Activated CD4-positive, alpha-beta memory T cell treated with anti-CD3 and anti-CD28 coated beads for 36 hours (primary cell): ENCODE measurements at regions of chr4 and their contacts with region 1.

Region 1: DNA sequence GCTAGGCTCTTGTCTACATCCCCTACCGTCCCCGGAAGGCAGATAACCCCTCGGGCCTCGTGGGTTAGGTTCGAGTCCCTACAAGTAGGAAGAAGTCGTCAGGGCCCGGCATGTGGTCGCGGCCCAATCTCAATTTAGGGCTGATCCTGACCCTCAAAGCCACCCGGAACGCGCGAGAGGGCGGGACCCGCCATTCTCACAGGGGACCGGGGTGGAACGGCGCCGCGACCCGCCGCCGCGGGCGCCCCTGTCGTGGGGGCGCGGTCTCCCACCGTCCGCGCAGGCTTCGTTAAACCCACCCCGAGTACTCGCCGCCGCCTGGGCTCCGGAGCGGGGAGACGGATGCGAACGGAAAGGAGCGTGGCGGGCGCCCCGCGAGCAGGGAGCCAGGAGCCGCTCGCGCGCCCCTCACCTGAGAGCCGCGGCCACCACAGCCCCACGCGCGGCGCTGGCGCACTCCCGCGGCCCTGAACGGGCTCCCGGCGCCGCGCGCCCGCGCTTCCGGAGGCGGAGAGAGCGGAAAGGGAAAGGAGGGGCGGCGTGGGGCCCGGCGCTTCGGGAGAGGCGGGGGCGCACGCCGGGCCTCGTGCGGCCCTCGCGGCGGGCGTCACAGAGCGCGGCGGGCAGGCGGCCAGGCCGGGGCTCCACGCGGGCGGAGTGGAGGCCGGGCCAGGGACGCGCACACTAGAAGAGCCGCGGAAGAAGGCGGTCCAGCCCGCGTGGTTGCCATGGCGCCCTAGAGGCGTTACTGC is at the start of gene CFAP97:
- DNase-seq: peak; percentile 81
- H3K4me3 Mint-ChIP-seq: peak within 1 kb of the TSS; percentile 94
- H3K27ac Mint-ChIP-seq: peak within 1 kb of the TSS; percentile 97
- H3K4me1 Mint-ChIP-seq: peaks cover 48% of the 10 kb centered on the region
- H3K27me3 Mint-ChIP-seq: no peaks in the 10 kb centered on the region
- total RNA-seq, gene CFAP97: 47.5 to 48.6 TPM

Region 2: DNA sequence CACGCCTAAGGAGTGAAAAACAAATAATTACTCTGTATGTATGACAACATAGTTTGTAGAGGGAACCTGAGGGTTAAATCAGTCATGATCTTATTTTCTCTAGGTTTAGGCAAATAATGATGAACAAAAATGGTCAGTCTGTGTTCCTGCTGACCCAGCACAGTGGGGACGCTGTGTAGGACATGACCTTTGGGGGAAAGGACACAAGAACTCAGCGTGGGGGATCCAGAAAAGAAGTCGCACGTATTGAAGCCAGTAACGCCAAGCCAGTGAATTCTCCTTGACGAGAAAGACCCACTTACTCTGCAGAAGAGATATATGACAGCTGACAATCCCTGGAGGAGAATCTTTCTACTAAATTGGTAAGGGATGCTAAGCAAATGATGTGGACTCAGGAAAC is 148.8 kb before region 1 on chr4:
- CTCF ChIA-PET with region 1: no interaction called
- POLR2A ChIA-PET with region 1: no interaction called
- intact Hi-C with region 1: no loop called
- DNase-seq: no peak
- H3K4me3 Mint-ChIP-seq: no peak overlapping the region
- H3K27ac Mint-ChIP-seq: no peak overlapping the region
- H3K4me1 Mint-ChIP-seq: no peaks in the 10 kb centered on the region
- H3K27me3 Mint-ChIP-seq: peaks cover 24% of the 10 kb centered on the region

Region 3: GRCh38 chr4:185142912-185143595 is 60.6 kb before region 1 on chr4 and contains the start of gene SLC25A4:
- CTCF ChIA-PET with region 1: no interaction called
- POLR2A ChIA-PET with region 1: interaction called, 3 read pairs
- intact Hi-C with region 1: loop called (anchors 1 kb)
- DNase-seq: peak; percentile 90
- H3K4me3 Mint-ChIP-seq: peak within 1 kb of the TSS; percentile 80
- H3K27ac Mint-ChIP-seq: no peak within 1 kb of the TSS
- H3K4me1 Mint-ChIP-seq: peaks cover 13% of the 10 kb centered on the region
- H3K27me3 Mint-ChIP-seq: peaks cover 25% of the 10 kb centered on the region
- total RNA-seq, gene SLC25A4: 7.7 to 8.4 TPM

Region 4: DNA sequence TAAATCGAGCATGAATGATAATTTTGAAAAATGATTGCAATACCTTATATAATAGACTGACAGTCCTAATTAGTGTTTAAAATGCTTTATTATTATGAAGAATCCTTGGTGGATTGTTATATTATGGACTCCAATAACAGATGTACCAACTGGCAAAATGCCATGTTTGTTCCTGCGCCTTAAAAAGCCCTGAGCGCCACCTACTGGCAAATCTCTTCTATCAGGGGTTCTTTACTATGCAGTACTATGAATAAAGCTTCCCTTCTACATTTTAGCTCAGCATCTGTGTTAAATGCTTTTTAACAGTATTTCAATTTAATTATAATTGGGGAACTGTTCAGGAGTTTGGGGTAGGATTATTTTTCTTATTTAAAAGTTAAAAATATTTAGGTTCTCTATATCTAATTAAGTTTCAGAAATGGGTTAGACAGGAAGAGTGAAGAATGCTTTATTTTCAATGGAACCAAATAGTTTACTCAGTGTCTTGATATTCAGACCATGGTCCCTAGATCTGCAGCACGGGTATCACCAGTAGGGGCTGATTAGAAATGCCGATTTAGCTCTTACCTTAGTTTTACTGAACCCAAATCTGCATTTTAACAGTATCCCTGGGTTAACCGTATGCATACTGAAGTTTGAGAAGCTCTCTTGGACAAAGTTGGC is 19.9 kb before region 1 on chr4:
- CTCF ChIA-PET with region 1: interaction called, 13 read pairs
- POLR2A ChIA-PET with region 1: interaction called, 4 read pairs
- intact Hi-C with region 1: no loop called
- DNase-seq: peak; percentile 78
- H3K4me3 Mint-ChIP-seq: no peak overlapping the region
- H3K27ac Mint-ChIP-seq: no peak overlapping the region
- H3K4me1 Mint-ChIP-seq: peaks cover 42% of the 10 kb centered on the region
- H3K27me3 Mint-ChIP-seq: no peaks in the 10 kb centered on the region

Region 5: DNA sequence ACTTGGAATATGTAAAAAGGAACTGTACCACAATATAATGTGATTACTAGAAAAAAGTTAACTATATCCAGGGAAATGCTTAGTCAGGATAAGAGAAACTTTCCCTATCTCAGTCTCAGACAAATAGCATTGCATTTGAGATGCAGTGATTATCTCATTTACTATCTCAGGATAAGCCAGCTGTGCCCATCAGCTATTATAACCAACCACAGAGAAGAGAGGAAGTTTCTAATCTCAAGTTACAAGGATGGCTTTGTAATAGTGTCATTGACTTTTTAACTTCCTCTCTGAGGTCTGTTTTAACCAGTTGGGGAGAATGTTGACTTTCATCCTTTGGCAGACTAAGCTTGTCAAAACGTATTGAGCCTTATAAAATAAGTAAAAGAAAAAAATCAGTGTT is 62.3 kb after region 1 on chr4:
- CTCF ChIA-PET with region 1: no interaction called
- POLR2A ChIA-PET with region 1: no interaction called
- intact Hi-C with region 1: no loop called
- DNase-seq: no peak
- H3K4me3 Mint-ChIP-seq: no peak overlapping the region
- H3K27ac Mint-ChIP-seq: peak overlapping the region; percentile 42
- H3K4me1 Mint-ChIP-seq: peaks cover 16% of the 10 kb centered on the region
- H3K27me3 Mint-ChIP-seq: no peaks in the 10 kb centered on the region

Region 6: DNA sequence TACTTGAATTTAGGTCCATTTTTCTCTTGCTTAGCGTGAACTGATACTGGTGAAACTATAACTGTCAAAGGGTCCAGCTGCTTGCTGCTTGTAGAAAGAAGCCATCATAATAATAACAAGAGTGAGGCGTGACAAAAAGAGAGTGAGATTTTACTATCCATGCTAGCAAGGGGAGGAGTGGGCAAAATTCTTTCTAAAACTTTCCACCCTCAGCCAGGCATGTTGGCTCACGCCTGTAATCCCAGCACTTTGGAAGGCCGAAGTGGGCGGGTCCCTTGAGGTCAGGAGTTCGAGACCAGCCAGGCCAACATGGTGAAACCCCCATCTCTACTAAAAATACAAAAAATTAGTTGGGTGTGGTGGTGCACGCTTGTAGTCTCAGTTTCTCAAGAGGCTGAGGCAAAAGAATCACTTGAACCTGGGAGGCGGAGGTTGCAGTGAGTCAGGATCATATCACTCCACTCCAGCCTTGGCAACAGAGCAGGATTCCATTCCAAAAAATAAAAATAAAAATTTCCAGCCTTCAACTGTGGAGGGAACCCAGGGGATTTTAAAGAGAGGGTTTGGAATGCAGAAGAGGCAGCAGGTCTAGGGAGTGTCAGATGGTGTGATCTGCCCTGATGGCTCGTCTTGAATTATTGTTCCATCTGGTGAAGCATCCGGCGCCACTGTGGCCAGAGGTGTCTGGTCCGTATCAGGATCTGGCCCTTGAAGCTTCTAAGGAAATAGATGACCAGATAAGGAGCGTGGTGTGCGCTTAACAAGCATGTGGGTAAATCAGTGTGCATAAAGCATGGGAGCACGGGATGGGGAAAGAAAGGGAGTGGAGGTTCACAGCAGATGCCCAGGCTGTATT is 140.3 kb after region 1 on chr4:
- CTCF ChIA-PET with region 1: no interaction called
- POLR2A ChIA-PET with region 1: no interaction called
- intact Hi-C with region 1: loop called (anchors 5 kb)
- DNase-seq: peak; percentile 33
- H3K4me3 Mint-ChIP-seq: no peak overlapping the region
- H3K27ac Mint-ChIP-seq: peak overlapping the region; percentile 79
- H3K4me1 Mint-ChIP-seq: peaks cover 65% of the 10 kb centered on the region
- H3K27me3 Mint-ChIP-seq: no peaks in the 10 kb centered on the region

Region 7: GRCh38 chr4:185597532-185598188 is 394.0 kb after region 1 on chr4:
- CTCF ChIA-PET with region 1: no interaction called
- POLR2A ChIA-PET with region 1: no interaction called
- intact Hi-C with region 1: loop called (anchors 2 kb)
- DNase-seq: peak; percentile 78
- H3K4me3 Mint-ChIP-seq: no peak overlapping the region
- H3K27ac Mint-ChIP-seq: no peak overlapping the region
- H3K4me1 Mint-ChIP-seq: peaks cover 2% of the 10 kb centered on the region
- H3K27me3 Mint-ChIP-seq: peaks cover 19% of the 10 kb centered on the region